Vagina (tissue), 2 donors: ENCODE measurements at regions of chr16 and their contacts with region 1.

Region 1: GRCh38 chr16:31010585-31011325 is at the start of gene STX1B:
- DNase-seq: no peak
- H3K4me3 ChIP-seq: peak within 1 kb of the TSS in 1 of 2 donors; percentile 44
- H3K27ac ChIP-seq: no peak within 1 kb of the TSS
- H3K4me1 ChIP-seq: peaks cover 5% of the 10 kb centered on the region
- H3K27me3 ChIP-seq: no peaks in the 10 kb centered on the region
- CTCF ChIP-seq: no peak
- POLR2A ChIP-seq: no peak
- total RNA-seq, gene STX1B: 4.7 TPM

Region 2: GRCh38 chr16:31067342-31067741 is 56.6 kb after region 1 on chr16:
- intact Hi-C with region 1: loop called (anchors 2 kb)
- DNase-seq: no peak
- H3K4me3 ChIP-seq: no peak overlapping the region
- H3K27ac ChIP-seq: no peak overlapping the region
- H3K4me1 ChIP-seq: peaks cover 22% of the 10 kb centered on the region
- H3K27me3 ChIP-seq: no peaks in the 10 kb centered on the region
- CTCF ChIP-seq: no peak
- POLR2A ChIP-seq: no peak

Region 3: GRCh38 chr16:31108035-31108793 is 97.5 kb after region 1 on chr16 and contains the start of gene BCKDK:
- intact Hi-C with region 1: no loop called
- DNase-seq: no peak
- H3K4me3 ChIP-seq: peak within 1 kb of the TSS; percentile 87 to 93
- H3K27ac ChIP-seq: peak within 1 kb of the TSS; percentile 93
- H3K4me1 ChIP-seq: peaks cover 25% of the 10 kb centered on the region
- H3K27me3 ChIP-seq: no peaks in the 10 kb centered on the region
- CTCF ChIP-seq: no peak
- POLR2A ChIP-seq: peak in 1 of 2 donors; percentile 45
- total RNA-seq, gene BCKDK: 48.9 TPM